Naive thymus-derived CD4-positive, alpha-beta T cell (primary cell): ENCODE measurements at regions of chrX and their contacts with region 1.

Region 1: DNA sequence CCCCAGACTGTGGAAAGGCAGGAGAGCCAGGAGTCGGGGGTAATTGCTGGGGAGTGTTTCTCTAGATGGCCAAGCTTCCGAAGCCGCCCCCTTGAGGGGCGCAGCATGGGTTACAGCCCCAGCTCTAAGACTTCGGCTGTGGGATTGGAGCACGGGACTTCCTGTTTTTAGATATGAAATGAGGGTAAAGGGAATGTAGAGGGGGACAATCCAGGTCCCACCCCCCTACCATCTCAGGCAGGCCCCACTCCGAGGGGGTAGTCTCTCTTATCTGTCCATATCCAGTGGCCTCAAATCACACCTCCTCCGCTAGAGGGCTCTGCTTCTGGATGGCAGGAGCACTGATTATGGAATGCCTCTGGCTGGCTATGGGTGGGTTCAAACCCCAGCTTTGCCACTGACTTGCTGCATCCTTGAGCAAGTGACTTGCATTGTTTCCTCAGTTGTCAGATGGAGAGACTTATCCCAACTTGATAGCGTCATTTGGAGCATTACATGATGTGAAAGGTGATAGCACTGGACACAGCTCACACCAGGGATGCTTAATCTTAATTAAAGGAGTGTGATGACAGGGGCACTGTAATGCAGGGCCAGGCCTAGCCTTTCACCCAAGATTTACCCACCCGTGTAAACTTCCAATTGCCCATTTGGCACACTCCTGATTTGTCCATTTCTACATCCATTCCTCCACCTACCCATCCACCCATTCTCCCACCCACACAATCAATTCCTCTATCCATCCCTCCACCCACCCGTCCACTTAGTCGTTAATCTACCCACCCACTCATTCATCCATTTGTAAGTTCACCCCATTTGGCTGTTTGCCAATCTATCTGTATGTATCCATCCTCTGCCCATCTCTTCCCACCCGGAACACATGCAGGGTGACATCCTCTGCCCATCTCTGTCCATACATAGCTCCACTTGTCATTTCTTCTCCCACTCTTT is 850 bp upstream of the KCND1 start:
- DNase-seq: peak in 4 of 9 donors; percentile 17 to 28 (median 22)
- ATAC-seq: peak; percentile 74
- H3K4me3 ChIP-seq: peak overlapping the region; percentile 30
- H3K4me3 Mint-ChIP-seq: peak overlapping the region in 9 of 10 donors; percentile 12 to 72 (median 57)
- H3K27ac ChIP-seq: no peak overlapping the region
- H3K27ac Mint-ChIP-seq: no peak overlapping the region
- H3K4me1 ChIP-seq: peaks cover 0 to 8% of the 10 kb centered on the region in 2 donors
- H3K4me1 Mint-ChIP-seq: peaks cover 6 to 17% (median 12%) of the 10 kb centered on the region in 7 donors
- H3K27me3 ChIP-seq: no peaks in the 10 kb centered on the region
- H3K27me3 Mint-ChIP-seq: no peaks in the 10 kb centered on the region

Region 2: GRCh38 chrX:48770296-48770695 is 202.2 kb before region 1 on chrX:
- CTCF ChIA-PET with region 1: no interaction called
- POLR2A ChIA-PET with region 1: no interaction called
- intact Hi-C with region 1: no loop called
- DNase-seq: no peak
- ATAC-seq: no peak
- H3K4me3 ChIP-seq: no peak overlapping the region
- H3K4me3 Mint-ChIP-seq: no peak overlapping the region
- H3K27ac ChIP-seq: no peak overlapping the region
- H3K27ac Mint-ChIP-seq: no peak overlapping the region
- H3K4me1 ChIP-seq: no peaks in the 10 kb centered on the region
- H3K4me1 Mint-ChIP-seq: no peaks in the 10 kb centered on the region
- H3K27me3 ChIP-seq: no peaks in the 10 kb centered on the region
- H3K27me3 Mint-ChIP-seq: peaks cover 0 to 4% (median 0%) of the 10 kb centered on the region in 5 donors

Region 3: DNA sequence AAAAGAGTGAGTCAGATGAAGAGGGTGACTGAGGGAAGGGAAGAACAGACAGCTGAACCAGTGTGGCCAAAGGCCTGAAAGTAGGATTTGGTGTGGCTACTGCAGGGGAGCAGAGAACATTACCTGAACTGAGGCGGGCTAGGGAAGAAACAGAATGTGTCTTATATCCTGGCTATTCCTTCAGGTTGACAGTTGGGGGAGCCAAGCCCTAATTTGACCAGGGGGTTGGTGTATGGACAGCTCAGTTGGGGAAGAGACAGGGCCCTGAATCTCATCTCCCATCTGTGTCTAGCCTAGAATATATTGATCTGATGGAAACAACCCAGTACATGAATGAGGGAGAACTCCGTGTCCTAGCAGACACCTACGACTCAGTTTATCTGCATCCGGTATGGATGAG is 166.4 kb before region 1 on chrX:
- CTCF ChIA-PET with region 1: no interaction called
- POLR2A ChIA-PET with region 1: no interaction called
- intact Hi-C with region 1: no loop called
- DNase-seq: no peak
- ATAC-seq: no peak
- H3K4me3 ChIP-seq: no peak overlapping the region
- H3K4me3 Mint-ChIP-seq: no peak overlapping the region
- H3K27ac ChIP-seq: no peak overlapping the region
- H3K27ac Mint-ChIP-seq: no peak overlapping the region
- H3K4me1 ChIP-seq: peaks cover 0 to 5% of the 10 kb centered on the region in 2 donors
- H3K4me1 Mint-ChIP-seq: peaks cover 6 to 19% (median 11%) of the 10 kb centered on the region in 7 donors
- H3K27me3 ChIP-seq: no peaks in the 10 kb centered on the region
- H3K27me3 Mint-ChIP-seq: no peaks in the 10 kb centered on the region

Region 4: GRCh38 chrX:48864210-48864609 is 108.3 kb before region 1 on chrX:
- CTCF ChIA-PET with region 1: no interaction called
- POLR2A ChIA-PET with region 1: no interaction called
- intact Hi-C with region 1: no loop called
- DNase-seq: no peak
- ATAC-seq: no peak
- H3K4me3 ChIP-seq: no peak overlapping the region
- H3K4me3 Mint-ChIP-seq: no peak overlapping the region
- H3K27ac ChIP-seq: no peak overlapping the region
- H3K27ac Mint-ChIP-seq: no peak overlapping the region
- H3K4me1 ChIP-seq: no peaks in the 10 kb centered on the region
- H3K4me1 Mint-ChIP-seq: no peaks in the 10 kb centered on the region
- H3K27me3 ChIP-seq: no peaks in the 10 kb centered on the region
- H3K27me3 Mint-ChIP-seq: peaks cover 0 to 4% (median 0%) of the 10 kb centered on the region in 5 donors

Region 5: DNA sequence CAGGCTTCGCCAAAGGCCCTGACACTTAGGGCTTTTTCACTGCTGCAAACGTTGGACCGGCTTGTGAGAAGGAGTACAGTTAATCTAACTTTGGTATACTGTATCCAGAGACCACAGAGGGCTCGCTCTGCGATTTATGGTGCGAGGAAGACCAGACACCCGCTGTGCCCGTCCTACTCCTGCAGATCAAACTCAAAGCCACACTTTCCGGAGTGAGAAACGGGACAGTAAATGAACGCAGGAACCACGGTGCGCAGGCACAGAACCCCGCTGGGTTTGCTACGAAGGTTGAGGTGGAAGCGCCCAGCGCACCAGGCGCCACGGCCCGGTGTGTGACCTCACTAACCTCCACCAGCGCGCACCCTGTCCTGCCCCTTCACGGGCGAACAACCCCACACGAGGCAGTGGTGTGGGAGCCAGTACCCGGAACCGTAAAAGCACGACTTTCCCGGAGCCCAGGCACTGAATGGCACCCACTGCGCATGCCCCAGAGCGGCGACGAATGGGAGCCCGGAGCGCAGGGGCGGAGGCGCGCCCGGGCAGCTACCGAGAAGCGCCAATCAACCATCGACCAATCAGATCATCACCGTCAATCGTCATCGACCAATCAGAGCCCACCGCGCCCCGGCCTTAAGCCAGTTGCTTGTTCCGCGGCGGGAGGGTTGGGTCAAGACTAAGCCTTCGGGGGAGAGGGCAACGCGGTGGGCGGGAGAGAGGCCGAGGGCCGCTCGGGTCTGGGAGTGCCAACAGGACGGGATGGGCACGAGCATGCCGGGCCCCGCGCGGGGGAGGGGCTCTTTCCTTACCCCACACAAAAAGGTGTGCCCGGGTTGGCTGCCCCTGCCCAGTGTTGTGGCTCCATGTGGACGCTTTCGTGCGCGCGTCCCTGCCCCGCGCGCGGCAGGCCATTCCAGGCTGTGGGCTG is 128.5 kb after region 1 on chrX:
- CTCF ChIA-PET with region 1: no interaction called
- POLR2A ChIA-PET with region 1: no interaction called
- intact Hi-C with region 1: loop called (anchors 5 to 10 kb)
- DNase-seq: peak; percentile 75 to 90 (median 87)
- ATAC-seq: peak; percentile 97
- H3K4me3 ChIP-seq: peak overlapping the region; percentile 82
- H3K4me3 Mint-ChIP-seq: peak overlapping the region; percentile 80 to 93 (median 90)
- H3K27ac ChIP-seq: peak overlapping the region; percentile 78
- H3K27ac Mint-ChIP-seq: peak overlapping the region; percentile 74 to 95 (median 91)
- H3K4me1 ChIP-seq: no peaks in the 10 kb centered on the region
- H3K4me1 Mint-ChIP-seq: peaks cover 0 to 8% (median 0%) of the 10 kb centered on the region in 7 donors
- H3K27me3 ChIP-seq: no peaks in the 10 kb centered on the region
- H3K27me3 Mint-ChIP-seq: no peaks in the 10 kb centered on the region